GM12878 (cell line): ENCODE measurements at regions of chr10 and their contacts with region 1.

Region 1: DNA sequence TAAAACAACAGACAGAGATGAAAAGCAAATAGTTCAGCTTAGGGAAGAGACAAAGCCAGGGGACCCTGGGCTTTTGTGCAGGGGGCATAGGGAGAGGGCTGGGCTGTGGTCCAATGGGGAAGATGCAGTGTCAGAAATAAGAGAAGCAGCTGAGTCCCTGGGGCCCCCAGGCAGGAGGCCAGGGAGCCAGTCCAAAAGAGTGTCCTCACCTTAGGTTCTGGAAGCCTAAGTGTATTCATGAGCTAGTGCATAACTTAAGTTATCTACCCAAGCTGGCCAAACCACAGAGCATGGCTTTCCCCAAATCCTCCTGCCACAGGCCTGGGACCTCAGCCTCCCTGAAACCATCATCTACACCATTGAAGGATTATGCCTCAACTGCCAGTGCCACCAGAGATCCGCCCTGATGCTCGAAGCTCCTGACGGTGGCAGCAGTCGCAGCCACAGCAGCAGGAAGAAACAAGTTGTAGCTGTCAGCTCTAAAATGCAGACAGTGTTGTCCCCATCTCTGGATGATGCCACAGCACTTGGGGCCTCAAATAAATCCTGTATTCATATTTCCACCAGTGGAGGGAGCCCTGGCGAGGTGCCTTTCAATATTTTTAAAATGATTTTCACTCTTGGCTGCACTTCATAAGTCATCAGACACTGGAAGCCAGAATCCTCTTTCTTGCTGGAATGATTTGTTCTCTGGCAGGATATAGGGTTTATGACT is 574.6 kb downstream of the GRID1 start:
- DNase-seq: no peak
- ATAC-seq: peak; percentile 46; the same call in 2 of the 3 replicates
- H3K4me3 ChIP-seq: no peak overlapping the region
- H3K27ac ChIP-seq: no peak overlapping the region
- H3K4me1 ChIP-seq: no peaks in the 10 kb centered on the region
- H3K27me3 ChIP-seq: no peaks in the 10 kb centered on the region
- CTCF ChIP-seq: peak in 2 of 3 experiments; percentile 31 to 35; a peak in 3 of 6 replicates
- EP300 ChIP-seq: no peak
- POLR2A ChIP-seq: no peak
- RAD21 ChIP-seq: peak; percentile 32; the same call in 1 of the 2 replicates

Region 2: DNA sequence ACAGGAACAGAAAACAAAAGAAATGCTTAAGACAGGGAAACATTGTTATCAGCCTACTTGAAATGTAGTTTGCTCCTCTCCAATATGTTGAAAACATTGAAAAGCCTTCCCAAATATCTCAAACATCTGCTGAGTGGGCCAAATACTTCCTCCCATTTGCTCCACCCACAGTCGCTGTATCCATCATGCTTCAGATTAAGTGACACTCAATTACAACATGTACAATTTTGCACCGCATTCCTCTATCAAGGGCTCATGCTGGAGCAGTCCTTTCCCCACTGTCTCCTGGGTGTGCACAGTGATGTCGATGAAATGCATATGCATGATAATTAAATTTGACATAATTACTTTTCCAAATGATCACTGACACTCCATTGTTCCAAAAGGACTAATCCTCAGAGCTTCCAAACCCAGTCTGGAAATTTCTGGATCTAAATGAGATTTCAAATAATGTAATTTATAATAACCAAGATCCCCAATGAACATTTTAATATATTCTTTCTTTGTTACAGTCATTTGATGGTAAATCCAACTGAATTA is 30.0 kb before region 1 on chr10:
- CTCF ChIA-PET with region 1: no interaction called
- POLR2A ChIA-PET with region 1: no interaction called
- RAD21 ChIA-PET with region 1: no interaction called
- SMC1A ChIA-PET with region 1: no interaction called
- in situ Hi-C with region 1: no loop called
- intact Hi-C with region 1: no loop called
- DNase-seq: no peak
- ATAC-seq: no peak
- H3K4me3 ChIP-seq: no peak overlapping the region
- H3K27ac ChIP-seq: no peak overlapping the region
- H3K4me1 ChIP-seq: no peaks in the 10 kb centered on the region
- H3K27me3 ChIP-seq: no peaks in the 10 kb centered on the region; a peak in 2 of 4 replicates
- CTCF ChIP-seq: no peak
- EP300 ChIP-seq: no peak
- POLR2A ChIP-seq: no peak
- RAD21 ChIP-seq: no peak

Region 3: GRCh38 chr10:85888004-85888403 is 96.0 kb after region 1 on chr10:
- CTCF ChIA-PET with region 1: no interaction called
- POLR2A ChIA-PET with region 1: no interaction called
- RAD21 ChIA-PET with region 1: no interaction called
- SMC1A ChIA-PET with region 1: no interaction called
- in situ Hi-C with region 1: no loop called
- intact Hi-C with region 1: no loop called
- DNase-seq: no peak
- ATAC-seq: no peak
- H3K4me3 ChIP-seq: no peak overlapping the region
- H3K27ac ChIP-seq: no peak overlapping the region
- H3K4me1 ChIP-seq: no peaks in the 10 kb centered on the region
- H3K27me3 ChIP-seq: no peaks in the 10 kb centered on the region; a peak in 1 of 4 replicates
- CTCF ChIP-seq: no peak
- EP300 ChIP-seq: no peak
- POLR2A ChIP-seq: no peak
- RAD21 ChIP-seq: no peak

Region 4: GRCh38 chr10:86355571-86356038 is 563.6 kb after region 1 on chr10:
- CTCF ChIA-PET with region 1: no interaction called
- POLR2A ChIA-PET with region 1: no interaction called
- RAD21 ChIA-PET with region 1: no interaction called
- SMC1A ChIA-PET with region 1: no interaction called
- in situ Hi-C with region 1: no loop called
- intact Hi-C with region 1: loop called (anchors 10 kb)
- DNase-seq: no peak
- ATAC-seq: peak; percentile 80
- H3K4me3 ChIP-seq: no peak overlapping the region
- H3K27ac ChIP-seq: no peak overlapping the region
- H3K4me1 ChIP-seq: peaks cover 9% of the 10 kb centered on the region
- H3K27me3 ChIP-seq: peaks cover 0 to 2% of the 10 kb centered on the region in 2 experiments; a peak in 1 of 4 replicates
- CTCF ChIP-seq: no peak
- EP300 ChIP-seq: no peak
- POLR2A ChIP-seq: no peak
- RAD21 ChIP-seq: no peak